PC-3 (cell line): ENCODE measurements at regions of chr10 and their contacts with region 1.

Region 1: DNA sequence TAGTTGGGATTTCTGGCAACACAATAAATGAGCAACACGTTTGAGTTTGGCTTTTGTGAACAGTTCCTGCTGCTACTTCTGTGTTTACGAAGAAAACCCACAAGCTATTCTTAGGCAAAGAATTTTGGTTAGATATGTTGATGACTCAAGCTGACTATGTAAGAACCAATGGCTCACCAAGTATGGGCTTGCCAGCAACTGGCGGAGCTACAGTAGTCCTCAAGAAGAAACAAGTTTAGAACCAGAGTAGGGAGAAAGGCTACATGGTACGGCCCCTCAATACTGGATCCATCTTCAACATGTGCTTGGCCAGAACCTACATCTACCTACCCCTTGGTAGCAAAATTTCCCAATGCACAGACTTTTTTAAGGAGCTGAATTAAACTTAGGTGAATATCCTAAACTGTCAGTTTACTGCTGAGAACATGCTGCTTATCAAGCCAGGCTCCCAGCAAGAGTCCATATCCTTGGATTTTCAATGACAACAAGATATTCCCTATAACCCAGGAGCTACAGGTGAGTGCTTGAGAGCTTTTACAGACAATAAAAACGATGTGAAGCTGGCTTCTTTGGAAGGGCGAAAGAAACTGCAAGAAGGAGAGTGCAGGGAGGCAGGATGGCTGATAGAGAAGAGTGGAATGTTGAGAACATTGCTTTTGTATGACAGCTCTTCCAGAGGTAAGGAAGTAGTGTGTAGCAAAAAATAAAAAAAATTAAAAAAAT is 74.3 kb upstream of the ASAH2 start:
- DNase-seq: peak; percentile 100
- ATAC-seq: peak; percentile 87
- H3K4me3 ChIP-seq: peak overlapping the region; percentile 36
- H3K27ac ChIP-seq: peak overlapping the region; percentile 69
- H3K4me1 ChIP-seq: peaks cover 42% of the 10 kb centered on the region
- H3K27me3 ChIP-seq: no peaks in the 10 kb centered on the region
- CTCF ChIP-seq: no peak

Region 2: GRCh38 chr10:50275650-50276235 is 49.9 kb before region 1 on chr10:
- CTCF ChIA-PET with region 1: interaction called, 3 read pairs
- POLR2A ChIA-PET with region 1: no interaction called
- intact Hi-C with region 1: loop called (anchors 2 kb)
- DNase-seq: peak; percentile 86
- ATAC-seq: peak; percentile 87
- H3K4me3 ChIP-seq: no peak overlapping the region
- H3K27ac ChIP-seq: no peak overlapping the region
- H3K4me1 ChIP-seq: peaks cover 6% of the 10 kb centered on the region
- H3K27me3 ChIP-seq: no peaks in the 10 kb centered on the region
- CTCF ChIP-seq: peak; percentile 99

Region 3: GRCh38 chr10:50367732-50368131 is 42.1 kb after region 1 on chr10:
- CTCF ChIA-PET with region 1: interaction called, 10 read pairs
- POLR2A ChIA-PET with region 1: no interaction called
- intact Hi-C with region 1: loop called (anchors 1 kb)
- DNase-seq: peak; percentile 94
- ATAC-seq: peak; percentile 89
- H3K4me3 ChIP-seq: no peak overlapping the region
- H3K27ac ChIP-seq: no peak overlapping the region
- H3K4me1 ChIP-seq: peaks cover 12% of the 10 kb centered on the region
- H3K27me3 ChIP-seq: no peaks in the 10 kb centered on the region
- CTCF ChIP-seq: peak; percentile 98

Region 4: GRCh38 chr10:50470345-50470744 is 144.7 kb after region 1 on chr10:
- CTCF ChIA-PET with region 1: no interaction called
- POLR2A ChIA-PET with region 1: no interaction called
- intact Hi-C with region 1: loop called (anchors 2 kb)
- DNase-seq: peak; percentile 50
- ATAC-seq: peak; percentile 20
- H3K4me3 ChIP-seq: peak overlapping the region; percentile 36
- H3K27ac ChIP-seq: peak overlapping the region; percentile 88
- H3K4me1 ChIP-seq: peaks cover 41% of the 10 kb centered on the region
- H3K27me3 ChIP-seq: no peaks in the 10 kb centered on the region
- CTCF ChIP-seq: no peak

Region 5: DNA sequence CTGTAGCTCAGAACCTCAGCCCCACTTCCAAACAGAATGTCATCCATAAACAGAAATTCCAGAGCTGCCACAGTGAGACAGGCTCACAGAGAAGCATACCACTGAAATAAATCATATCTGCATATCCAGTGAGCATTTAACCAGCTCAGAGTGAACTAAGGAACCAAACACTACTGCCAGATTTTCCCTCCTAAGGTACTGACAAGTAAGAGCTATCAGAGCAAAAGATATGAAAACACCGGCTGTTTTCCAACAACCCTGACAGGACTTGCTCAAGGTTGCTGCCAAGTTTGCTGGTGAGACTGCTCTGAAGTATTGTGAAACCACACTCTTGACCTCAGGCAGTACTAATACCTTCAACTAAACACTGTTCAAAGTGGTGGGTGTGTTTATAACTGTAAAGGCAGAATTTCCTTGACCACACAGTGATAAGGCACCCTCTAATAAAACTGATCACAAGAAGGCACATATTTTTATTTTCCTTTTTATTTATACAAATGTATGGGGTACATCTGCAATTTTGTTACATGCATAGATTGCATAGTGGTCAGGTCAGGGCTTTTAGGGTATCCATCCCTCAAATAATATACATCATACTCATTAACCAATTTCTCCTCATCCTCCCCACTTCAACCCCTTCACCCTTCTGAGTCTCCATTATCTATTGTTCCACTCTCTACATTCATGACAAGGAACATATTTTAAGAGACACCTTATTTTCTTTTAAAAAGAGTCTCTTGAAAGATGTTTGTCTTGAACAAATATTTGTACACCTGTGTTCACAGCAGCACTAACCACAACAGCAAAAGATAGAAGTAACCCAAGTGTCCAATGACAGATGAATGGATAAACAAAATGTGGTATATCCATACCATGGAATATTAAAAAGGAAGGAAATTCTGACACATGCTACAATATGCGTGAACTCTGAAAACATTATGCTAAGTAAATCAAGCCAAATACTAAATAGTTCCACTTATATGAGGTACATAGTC is 280.0 kb after region 1 on chr10:
- CTCF ChIA-PET with region 1: no interaction called
- POLR2A ChIA-PET with region 1: no interaction called
- intact Hi-C with region 1: loop called (anchors 1 kb)
- DNase-seq: peak; percentile 99
- ATAC-seq: peak; percentile 73
- H3K4me3 ChIP-seq: peak overlapping the region; percentile 13; the same call in 1 of the 2 replicates
- H3K27ac ChIP-seq: peak overlapping the region; percentile 66
- H3K4me1 ChIP-seq: peaks cover 77% of the 10 kb centered on the region
- H3K27me3 ChIP-seq: no peaks in the 10 kb centered on the region
- CTCF ChIP-seq: no peak